ENCODE measurements at regions of chr15 and their contacts with region 1.

Region 1: DNA sequence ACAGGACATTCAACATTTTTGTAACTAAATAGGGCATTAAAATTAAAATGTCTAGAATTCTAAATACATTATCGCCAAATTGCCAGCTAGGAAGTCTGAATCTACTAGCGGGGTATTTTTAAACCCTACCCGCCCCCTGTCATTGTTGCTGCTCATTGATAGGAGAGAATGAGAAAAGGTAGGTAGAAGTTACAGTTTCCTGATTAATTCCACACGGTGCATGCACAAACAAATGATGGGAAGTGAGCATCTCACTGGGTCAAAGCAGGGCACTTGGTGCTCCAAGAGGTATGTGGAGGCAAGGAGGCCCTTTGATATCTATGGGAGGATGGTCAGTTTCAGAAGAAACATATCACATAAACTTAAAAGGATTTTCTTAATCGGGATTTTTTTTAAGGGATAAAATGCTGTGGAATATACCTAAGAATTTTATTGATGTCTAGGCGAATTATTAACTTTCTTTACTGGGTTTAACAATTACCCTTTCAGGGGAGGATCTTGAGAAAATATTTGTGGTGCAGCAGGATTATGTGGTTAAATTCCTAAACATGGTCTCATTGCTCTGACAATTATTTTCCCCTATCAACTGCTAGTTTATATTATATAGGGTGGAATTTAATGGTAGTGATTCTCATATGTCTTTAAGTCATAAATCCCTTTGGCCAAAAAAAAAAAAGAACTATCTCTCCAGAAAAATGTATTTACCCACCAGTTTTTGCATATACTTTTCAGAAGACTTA is 236.0 kb upstream of the GOLGA6L4 start:
- DNase-seq: no peak
- H3K4me3 ChIP-seq: no peak overlapping the region
- H3K27ac ChIP-seq: no peak overlapping the region
- H3K4me1 ChIP-seq: no peaks in the 10 kb centered on the region
- H3K27me3 ChIP-seq: no peaks in the 10 kb centered on the region
- CTCF ChIP-seq: no peak
- POLR2A ChIP-seq: no peak

Region 2: DNA sequence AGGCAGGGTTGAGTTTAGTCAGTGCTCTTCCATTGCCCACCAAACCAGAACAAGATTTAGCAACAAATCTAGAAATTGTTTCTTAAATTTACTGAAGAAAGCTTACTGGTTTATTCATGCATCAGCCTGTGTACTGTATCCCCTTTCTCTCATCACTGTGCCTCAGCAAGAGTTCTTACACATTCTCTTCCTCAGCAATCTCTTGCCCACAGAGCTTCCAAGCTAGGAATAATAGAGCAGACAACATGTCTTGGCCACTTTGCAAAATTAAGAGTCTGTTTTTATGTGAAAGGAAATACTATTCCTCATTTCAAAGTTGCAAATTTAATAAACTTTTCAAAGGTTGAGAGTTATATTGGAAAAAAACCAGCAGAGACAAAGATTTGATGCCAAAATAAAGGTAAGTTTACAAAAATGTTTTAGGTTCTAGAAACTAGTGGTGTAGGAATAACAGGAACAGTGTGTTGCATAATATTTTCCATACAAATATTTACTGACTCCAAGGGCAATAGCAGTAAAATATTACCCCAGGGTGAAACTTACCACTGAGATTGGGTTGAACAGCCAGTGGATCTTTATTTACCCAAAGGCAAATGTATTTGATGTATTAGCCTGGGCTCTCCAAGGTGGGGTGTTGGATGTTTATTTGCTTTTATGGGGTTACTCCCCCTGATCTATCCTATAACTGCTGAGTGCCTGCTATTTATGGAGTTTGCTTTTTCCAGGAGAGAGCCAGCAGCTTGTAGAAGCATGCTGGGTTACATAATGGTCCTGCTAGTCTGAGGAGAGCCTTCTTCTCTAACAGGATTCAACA is 69.0 kb before region 1 on chr15:
- intact Hi-C with region 1: loop called (anchors 2 kb)
- DNase-seq: peak; percentile 90
- H3K4me3 ChIP-seq: no peak overlapping the region
- H3K27ac ChIP-seq: peak overlapping the region; percentile 26 to 32
- H3K4me1 ChIP-seq: peaks cover 3% of the 10 kb centered on the region
- H3K27me3 ChIP-seq: no peaks in the 10 kb centered on the region
- CTCF ChIP-seq: peak in 1 of 4 experiments; percentile 25
- POLR2A ChIP-seq: no peak

Region 3: DNA sequence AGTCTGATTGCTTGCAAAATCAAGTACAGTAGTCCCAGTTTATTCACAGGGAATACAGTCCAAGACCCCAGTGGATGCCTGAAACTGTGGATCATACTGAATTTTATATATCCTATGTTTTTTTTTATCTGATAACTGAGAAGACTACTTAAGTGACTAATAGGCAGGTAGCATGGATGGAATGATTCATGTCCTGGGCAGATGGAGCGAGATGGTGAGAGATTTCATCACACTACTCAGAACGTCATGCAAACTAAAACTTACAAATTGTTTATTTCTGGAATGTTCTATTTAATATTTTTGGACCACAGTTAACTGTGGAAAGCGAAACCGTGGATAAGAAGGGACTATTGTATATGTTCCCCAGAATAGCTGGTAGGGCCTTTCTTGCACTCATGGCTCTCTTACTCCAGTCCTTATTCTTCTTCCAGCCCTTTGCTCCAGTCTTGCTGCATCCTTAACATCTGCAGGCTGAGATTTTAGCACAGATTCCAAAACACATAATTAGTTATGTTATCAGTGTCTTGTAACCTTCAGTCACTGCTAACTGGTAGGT is 55.6 kb before region 1 on chr15:
- intact Hi-C with region 1: no loop called
- DNase-seq: no peak
- H3K4me3 ChIP-seq: no peak overlapping the region
- H3K27ac ChIP-seq: no peak overlapping the region
- H3K4me1 ChIP-seq: no peaks in the 10 kb centered on the region
- H3K27me3 ChIP-seq: no peaks in the 10 kb centered on the region
- CTCF ChIP-seq: no peak
- POLR2A ChIP-seq: no peak

Measured in prostate gland (tissue), 2 donors.